IMR-90 (cell line): ENCODE measurements at regions of chr3 and their contacts with region 1.

Region 1: DNA sequence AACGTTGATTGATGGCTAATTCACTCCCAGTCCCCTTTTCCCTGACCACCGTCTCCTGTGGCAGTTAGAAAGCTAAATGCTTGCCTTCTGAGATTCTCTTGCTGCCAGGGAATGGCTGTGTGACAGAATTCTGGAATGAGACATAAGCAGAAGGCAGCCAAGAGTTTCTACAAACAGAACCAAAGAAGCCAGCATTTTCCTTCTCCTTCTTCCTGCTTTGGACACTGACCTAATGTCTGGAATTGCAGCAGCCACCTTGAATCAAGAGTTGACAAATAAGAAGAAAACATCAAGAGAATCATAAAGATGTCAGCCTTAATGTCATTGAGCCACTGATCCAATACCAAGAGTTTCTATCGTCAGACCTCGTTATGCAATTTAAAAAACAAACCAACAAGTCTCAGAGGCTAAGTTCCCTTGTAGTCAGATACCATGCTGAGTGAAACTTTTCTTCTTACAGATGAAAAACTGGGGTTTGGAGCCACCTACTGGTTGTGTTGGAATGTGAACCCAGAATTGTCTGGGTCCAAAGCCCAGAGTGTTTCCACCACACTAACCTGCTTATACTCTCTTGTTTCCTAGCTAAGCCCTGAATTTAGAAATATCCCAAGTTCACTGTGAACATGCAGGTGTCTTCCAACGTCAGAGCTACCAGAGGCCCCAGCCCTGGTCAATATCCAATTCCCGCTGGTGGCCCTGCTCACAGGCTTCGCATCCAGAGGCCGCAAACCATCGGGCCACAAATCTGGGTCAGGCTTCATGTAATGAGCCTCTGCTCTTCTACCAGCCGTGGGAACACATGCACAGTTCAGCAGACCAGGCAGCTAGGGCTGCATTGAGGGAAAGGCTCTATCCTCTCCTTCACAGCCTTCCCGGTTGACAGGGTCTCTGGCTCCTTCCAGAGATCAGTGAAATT is 42.5 kb downstream of the MCF2L2 start:
- DNase-seq: peak; percentile 71
- ATAC-seq: peak; percentile 88
- H3K4me3 ChIP-seq: no peak overlapping the region
- H3K27ac ChIP-seq: no peak overlapping the region
- H3K4me1 ChIP-seq: no peaks in the 10 kb centered on the region
- H3K27me3 ChIP-seq: peaks cover 17% of the 10 kb centered on the region
- CTCF ChIP-seq: peak; percentile 77
- POLR2A ChIP-seq: no peak
- RAD21 ChIP-seq: peak; percentile 83

Region 2: GRCh38 chr3:182713743-182714517 is 672.0 kb before region 1 on chr3:
- CTCF ChIA-PET with region 1: no interaction called
- POLR2A ChIA-PET with region 1: no interaction called
- dilution Hi-C with region 1: no loop called
- in situ Hi-C with region 1: loop called (anchors 25 kb)
- intact Hi-C with region 1: loop called (anchors 2 kb)
- DNase-seq: peak; percentile 79
- ATAC-seq: peak; percentile 92
- H3K4me3 ChIP-seq: no peak overlapping the region
- H3K27ac ChIP-seq: no peak overlapping the region
- H3K4me1 ChIP-seq: no peaks in the 10 kb centered on the region
- H3K27me3 ChIP-seq: peaks cover 3% of the 10 kb centered on the region
- CTCF ChIP-seq: peak; percentile 81
- POLR2A ChIP-seq: no peak
- RAD21 ChIP-seq: peak; percentile 82

Region 3: DNA sequence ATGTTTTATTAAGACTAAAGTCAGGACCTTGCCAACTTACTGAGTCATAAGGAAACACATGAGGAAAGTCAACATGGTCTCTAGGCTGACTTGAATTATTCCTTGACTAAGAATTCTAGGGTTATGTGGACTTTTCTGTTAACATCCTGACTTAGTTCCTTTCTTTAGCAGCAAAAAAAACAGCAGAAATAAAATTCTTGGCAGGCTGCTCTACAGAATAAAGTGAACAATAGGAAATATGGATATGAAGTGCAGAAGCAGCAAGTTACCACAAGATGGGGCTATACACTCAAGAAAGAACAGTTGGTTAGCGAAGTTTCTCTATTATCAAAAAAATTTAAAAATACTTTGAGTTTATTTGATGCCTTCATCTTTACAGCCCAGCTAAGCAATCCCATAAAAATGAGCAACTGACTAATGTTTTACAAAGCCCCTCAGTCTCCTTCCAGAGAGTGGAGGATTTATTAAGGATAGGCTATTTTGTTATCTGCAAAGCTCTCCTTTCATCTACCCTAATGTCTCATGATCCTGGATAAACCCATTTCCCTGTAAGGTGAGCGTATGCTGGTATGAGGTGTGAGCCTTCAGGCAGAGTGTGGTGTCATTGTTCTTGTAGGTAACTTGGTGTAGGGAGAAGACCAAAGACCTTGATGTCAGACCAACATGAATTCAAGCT is 263.6 kb before region 1 on chr3:
- CTCF ChIA-PET with region 1: interaction called, 18 read pairs
- POLR2A ChIA-PET with region 1: no interaction called
- dilution Hi-C with region 1: no loop called
- in situ Hi-C with region 1: loop called (anchors 5 kb)
- intact Hi-C with region 1: loop called (anchors 1 kb)
- DNase-seq: peak; percentile 74
- ATAC-seq: peak; percentile 78
- H3K4me3 ChIP-seq: no peak overlapping the region
- H3K27ac ChIP-seq: no peak overlapping the region
- H3K4me1 ChIP-seq: 0 out of 2 replicates have a peak, but pooled peaks cover 2% of the 10 kb centered on the region
- H3K27me3 ChIP-seq: peaks cover 12% of the 10 kb centered on the region
- CTCF ChIP-seq: peak; percentile 93
- POLR2A ChIP-seq: no peak
- RAD21 ChIP-seq: peak; percentile 87

Region 4: DNA sequence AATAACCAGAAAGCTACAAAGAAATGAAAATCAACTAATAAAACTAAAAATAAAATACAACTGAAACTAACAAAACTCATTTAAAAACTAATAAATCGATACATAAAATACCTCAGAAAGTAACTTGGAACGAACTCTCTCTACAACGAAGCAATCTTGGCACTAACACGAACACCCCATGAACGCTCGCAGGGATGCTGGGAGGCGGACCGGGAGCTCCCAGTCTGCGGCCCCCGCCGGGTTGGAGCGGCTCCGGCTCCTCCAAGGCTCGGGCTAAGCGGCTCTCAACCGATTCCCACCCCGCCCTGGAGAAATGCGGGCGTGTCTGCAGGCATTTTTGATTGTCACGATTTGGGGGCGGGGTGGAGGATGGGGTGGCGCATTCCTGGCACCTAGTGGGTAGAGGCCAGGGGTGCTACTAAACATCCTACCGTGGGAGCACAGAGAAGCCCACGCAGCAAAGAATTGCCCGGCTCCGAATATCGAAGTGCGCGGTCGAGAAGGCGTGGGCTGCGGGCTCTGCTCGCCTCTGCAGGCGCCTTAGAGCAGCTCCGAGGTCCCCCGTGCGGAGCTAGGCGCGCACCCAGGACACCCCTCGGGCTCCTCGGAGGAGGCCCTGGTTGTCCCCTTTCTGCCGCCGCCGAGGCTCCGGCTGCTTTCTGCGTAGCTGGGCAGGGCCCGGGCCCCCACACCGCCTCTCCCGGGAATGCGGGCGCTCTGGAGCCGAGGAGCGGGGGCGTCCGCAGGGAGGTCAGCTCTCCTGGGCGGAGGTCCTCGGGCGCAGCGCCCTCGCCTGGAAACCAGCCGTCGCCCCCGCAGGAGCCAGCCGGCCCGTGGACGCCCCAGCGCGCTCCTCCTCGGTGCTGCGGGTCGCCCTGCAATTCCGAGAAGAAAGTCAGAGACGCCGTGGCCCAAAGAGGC is 207.1 kb before region 1 on chr3:
- CTCF ChIA-PET with region 1: interaction called, 62 read pairs
- POLR2A ChIA-PET with region 1: no interaction called
- dilution Hi-C with region 1: no loop called
- in situ Hi-C with region 1: loop called (anchors 5 kb)
- intact Hi-C with region 1: loop called (anchors 1 kb)
- DNase-seq: no peak
- ATAC-seq: peak; percentile 76
- H3K4me3 ChIP-seq: peak overlapping the region; percentile 48
- H3K27ac ChIP-seq: no peak overlapping the region
- H3K4me1 ChIP-seq: no peaks in the 10 kb centered on the region
- H3K27me3 ChIP-seq: peaks cover 46% of the 10 kb centered on the region
- CTCF ChIP-seq: peak; percentile 18; the same call in 1 of the 2 replicates
- POLR2A ChIP-seq: no peak
- RAD21 ChIP-seq: no peak

Region 5: DNA sequence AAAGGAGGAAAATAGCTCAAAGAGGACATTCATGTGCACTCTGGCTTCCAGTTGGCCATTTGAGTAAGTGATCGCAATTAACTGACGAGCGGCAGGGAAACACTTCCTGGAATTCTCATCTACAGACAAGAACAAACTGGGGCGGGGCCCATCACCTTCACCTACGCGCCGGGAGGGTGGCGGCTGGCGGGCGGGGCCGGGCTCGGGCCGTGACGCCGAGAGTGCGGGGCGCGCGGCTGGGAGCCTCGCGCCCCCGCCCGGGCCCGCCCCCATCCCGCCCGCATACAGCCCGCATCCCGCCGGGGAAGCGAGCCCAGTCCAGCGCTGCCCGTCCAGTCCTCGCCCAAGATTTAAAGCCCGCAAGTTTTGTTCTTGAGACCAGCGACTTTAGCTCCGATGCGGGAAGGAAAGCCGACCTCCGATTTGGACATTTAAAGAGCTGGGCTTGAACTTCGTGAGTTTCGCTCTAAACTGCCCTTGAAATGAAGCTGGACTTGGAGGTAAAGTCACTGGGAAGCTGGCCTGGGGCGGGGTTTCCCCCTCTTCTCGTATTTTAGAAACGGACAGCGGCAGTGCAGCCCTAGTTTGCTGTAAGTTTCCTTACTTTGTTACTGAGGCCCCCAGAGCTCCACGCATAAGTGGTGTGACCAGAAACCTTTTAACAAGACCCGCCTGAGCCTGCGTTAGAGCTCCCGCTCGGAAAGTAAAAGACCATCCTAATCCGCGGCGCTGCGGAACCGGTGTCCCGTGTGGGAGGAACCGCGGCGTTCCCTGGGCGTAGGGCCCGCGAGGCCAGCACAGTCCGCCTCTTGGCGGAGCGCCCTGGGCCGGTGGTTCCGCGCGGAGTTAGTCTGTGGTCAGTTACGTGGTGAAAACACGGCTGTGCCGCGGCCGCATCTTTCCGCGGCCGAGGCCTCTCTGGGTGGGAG is 132.7 kb before region 1 on chr3 and contains the start of gene B3GNT5:
- CTCF ChIA-PET with region 1: interaction called, 4 read pairs
- POLR2A ChIA-PET with region 1: no interaction called
- dilution Hi-C with region 1: no loop called
- in situ Hi-C with region 1: no loop called
- intact Hi-C with region 1: loop called (anchors 5 kb)
- DNase-seq: peak; percentile 41
- ATAC-seq: peak; percentile 73
- H3K4me3 ChIP-seq: peak within 1 kb of the TSS; percentile 61
- H3K27ac ChIP-seq: no peak within 1 kb of the TSS; the same call in 1 of the 2 replicates
- H3K4me1 ChIP-seq: no peaks in the 10 kb centered on the region
- H3K27me3 ChIP-seq: peaks cover 36% of the 10 kb centered on the region
- CTCF ChIP-seq: no peak
- POLR2A ChIP-seq: no peak
- RAD21 ChIP-seq: no peak
- total RNA-seq, gene B3GNT5: 3.4 and 4.4 TPM in 2 replicates

Region 6: GRCh38 chr3:183766745-183767606 is 381.0 kb after region 1 on chr3:
- CTCF ChIA-PET with region 1: no interaction called
- POLR2A ChIA-PET with region 1: no interaction called
- dilution Hi-C with region 1: no loop called
- in situ Hi-C with region 1: no loop called
- intact Hi-C with region 1: loop called (anchors 5 kb)
- DNase-seq: peak; percentile 67
- ATAC-seq: peak; percentile 87
- H3K4me3 ChIP-seq: no peak overlapping the region
- H3K27ac ChIP-seq: no peak overlapping the region
- H3K4me1 ChIP-seq: peaks cover 4% of the 10 kb centered on the region; the same call in 1 of the 2 replicates
- H3K27me3 ChIP-seq: no peaks in the 10 kb centered on the region
- CTCF ChIP-seq: peak; percentile 67
- POLR2A ChIP-seq: no peak
- RAD21 ChIP-seq: peak; percentile 84

Region 7: DNA sequence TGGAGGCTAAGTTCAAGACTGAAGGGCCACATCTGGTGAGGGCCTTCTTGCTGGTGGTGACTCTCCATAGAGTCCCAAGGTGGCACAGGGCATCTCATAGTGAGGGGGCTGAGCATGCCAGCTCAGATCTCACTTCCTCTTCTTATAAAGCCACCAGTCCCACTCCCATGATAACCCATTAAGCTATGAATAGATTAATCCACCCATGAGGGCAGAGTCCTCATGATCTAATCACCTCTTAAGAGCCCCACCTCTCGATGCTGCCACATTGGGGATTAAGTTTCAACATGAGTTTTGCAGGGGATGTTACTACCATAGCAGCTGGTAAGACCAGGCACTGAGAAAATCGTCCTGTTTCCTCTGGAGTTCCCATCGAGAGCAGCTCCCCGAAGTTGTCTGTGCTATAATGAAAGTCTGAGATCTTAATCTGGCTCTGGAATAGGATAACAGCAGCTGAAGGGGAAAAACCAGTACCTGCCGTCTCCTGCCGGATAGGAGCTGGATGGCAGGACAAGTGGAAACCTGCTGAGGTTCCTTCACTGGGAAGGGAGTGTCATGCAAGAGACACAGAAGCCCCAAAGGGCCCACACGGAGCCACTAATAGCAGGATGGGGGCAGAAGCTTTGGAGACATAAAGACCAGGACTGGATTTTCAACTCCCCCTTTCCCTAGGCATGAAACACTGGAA is 1096.2 kb after region 1 on chr3:
- CTCF ChIA-PET with region 1: no interaction called
- POLR2A ChIA-PET with region 1: no interaction called
- dilution Hi-C with region 1: no loop called
- in situ Hi-C with region 1: no loop called
- intact Hi-C with region 1: no loop called
- DNase-seq: no peak
- ATAC-seq: no peak
- H3K4me3 ChIP-seq: no peak overlapping the region
- H3K27ac ChIP-seq: no peak overlapping the region
- H3K4me1 ChIP-seq: no peaks in the 10 kb centered on the region
- H3K27me3 ChIP-seq: peaks cover 23% of the 10 kb centered on the region
- CTCF ChIP-seq: no peak
- POLR2A ChIP-seq: no peak
- RAD21 ChIP-seq: no peak